Posterior vena cava (tissue), 2 donors: ENCODE measurements at regions of chrX and their contacts with region 1.

Region 1: DNA sequence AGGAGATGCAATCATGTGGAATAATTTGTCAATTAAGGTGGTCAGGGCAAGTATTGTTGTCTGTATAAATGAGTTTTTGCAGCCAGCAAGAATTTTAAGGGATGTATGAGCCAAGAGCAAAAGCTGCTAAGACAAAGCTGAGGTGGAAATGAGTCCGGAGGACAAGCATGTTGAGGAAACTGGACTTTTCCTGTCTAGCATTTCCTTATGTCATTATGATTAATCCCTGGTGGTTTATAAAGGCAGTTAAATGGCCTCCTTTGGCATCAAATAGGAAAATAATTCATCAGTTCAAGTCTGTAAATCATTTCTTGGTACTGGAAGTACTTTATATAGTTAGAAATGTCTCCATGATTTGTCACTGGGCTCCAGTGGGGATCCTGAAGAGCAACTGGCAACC is 61.6 kb upstream of the TEX13A start:
- DNase-seq: no peak

Region 2: DNA sequence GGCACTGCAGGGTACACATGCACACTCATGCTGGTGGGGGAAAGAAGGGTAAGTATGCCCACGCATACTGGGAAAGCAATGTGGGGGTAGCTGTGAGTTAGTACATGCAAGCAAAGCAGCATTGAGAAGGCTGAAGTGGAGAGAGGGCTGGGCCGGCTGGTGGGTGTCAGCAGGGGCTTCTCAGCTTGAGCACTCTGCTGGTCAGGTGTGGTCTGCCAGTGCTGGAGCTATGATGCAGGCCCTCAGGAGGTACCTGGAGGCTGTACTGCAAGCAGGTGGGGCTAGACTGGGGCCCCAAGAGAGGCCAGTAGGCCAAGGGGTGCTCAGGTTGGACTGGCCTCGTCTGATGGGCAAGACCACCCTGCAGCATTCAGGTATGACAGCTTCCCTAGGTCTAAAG is 818.4 kb after region 1 on chrX:
- intact Hi-C with region 1: loop called in 1 of 2 experiments (anchors 5 kb)
- DNase-seq: no peak